Ovary (tissue), 10 donors: ENCODE measurements at regions of chrX and their contacts with region 1.

Region 1: DNA sequence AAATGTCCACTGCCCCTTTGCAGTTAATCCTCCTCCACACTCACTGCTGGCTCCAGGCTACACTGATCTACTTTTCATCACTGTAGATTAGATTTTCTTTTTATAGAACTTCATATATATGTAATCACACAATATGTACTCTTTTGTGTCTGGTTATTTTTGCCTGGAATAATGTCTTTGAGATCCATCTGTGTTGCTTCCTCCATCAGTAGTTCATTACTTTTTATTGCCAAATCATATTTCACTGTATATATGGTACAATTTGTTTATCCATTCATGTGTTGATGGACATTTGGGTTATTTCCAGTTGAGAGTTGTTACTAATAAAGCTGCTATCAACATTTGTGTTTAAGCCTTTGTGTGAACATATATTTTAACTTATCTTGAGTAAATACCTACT is 126.4 kb upstream of the SMIM10 start:
- DNase-seq: no peak
- H3K4me3 ChIP-seq: no peak overlapping the region
- H3K27ac ChIP-seq: no peak overlapping the region
- H3K4me1 ChIP-seq: no peaks in the 10 kb centered on the region
- H3K27me3 ChIP-seq: no peaks in the 10 kb centered on the region
- CTCF ChIP-seq: no peak
- EP300 ChIP-seq: no peak
- POLR2A ChIP-seq: no peak

Region 2: DNA sequence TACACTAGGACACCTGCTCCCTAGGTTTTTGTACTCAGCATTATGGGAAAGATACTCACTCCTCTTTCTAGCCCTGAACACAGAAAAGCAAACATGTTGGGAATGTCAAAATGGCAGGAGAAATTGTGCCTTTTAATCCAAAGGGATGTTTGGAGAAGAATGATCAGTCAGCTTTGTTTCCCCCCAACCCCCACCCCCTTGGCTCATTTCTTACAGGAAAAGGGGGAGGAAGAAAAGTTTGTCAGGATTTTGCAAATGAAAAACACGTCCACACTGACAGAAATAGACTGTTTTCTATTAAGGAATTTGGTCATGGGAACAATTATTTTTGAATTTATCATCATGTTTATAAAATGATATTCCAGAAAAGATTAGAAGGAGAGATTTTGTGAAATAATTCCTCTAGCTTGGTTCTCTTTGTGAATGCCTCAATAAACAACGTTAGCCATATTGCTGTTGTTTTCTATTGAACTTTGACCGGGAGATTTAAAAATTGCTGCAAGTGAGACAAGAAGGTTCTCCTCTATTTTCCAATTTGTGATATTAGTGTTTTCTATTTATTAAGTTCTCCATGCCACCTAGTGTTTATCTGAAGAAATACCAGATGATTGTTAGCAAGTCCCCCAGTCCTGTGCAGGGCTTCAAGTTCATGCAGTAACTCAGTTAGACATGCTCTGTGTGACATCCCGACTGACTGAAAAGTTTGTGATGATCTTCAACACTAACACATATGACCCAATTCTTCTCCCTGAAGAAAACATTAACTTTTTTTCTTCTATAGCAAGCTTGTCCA is 1615.0 kb before region 1 on chrX:
- intact Hi-C with region 1: loop called in 1 of 4 experiments (anchors 5 kb)
- DNase-seq: peak in 3 of 5 donors; percentile 15 to 55 (median 29)
- H3K4me3 ChIP-seq: no peak overlapping the region
- H3K27ac ChIP-seq: no peak overlapping the region
- H3K4me1 ChIP-seq: peaks cover 1% of the 10 kb centered on the region
- H3K27me3 ChIP-seq: no peaks in the 10 kb centered on the region
- CTCF ChIP-seq: no peak
- EP300 ChIP-seq: no peak
- POLR2A ChIP-seq: no peak